ENCODE measurements at regions of chr4 and their contacts with region 1.

Region 1: DNA sequence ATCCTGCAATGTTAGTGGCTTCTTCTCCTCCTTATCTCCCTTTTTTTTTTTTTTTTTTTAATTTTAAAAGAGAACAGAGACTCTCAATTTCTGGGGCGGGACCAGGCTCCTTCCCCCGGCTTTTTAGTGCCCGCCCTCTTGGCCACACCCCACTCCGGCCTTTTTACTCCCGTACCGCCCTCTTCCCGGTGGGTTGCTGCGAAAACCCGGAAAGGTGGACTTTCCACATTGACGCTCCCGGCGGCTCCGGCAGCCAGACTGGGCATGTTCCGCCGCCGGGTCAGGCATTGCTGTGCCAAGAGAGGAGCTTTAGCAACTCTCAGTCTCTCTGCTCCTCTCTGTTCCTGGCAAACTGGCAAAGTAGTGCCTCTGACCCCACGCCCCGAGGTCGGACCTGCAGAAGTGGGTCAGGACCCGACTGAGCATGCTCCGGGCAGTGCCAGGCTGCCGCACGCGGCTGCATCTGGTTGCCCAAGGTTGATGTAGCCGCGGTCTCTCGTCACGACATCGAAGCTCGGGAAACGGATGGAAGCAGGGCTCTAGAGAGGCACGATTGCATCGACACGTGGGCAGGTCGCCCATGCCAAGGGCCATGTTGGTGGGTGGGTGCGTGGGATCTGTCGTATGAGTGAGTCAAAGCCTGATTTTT is 1.1 kb upstream of the MFAP3L start:
- DNase-seq: peak; percentile 77 to 94 (median 87)
- ATAC-seq: peak; percentile 76
- H3K4me3 ChIP-seq: peak overlapping the region; percentile 84
- H3K4me3 Mint-ChIP-seq: peak overlapping the region; percentile 93
- H3K27ac ChIP-seq: peak overlapping the region; percentile 6 to 65
- H3K27ac Mint-ChIP-seq: peak overlapping the region; percentile 60
- H3K4me1 ChIP-seq: peaks cover 5% of the 10 kb centered on the region
- H3K4me1 Mint-ChIP-seq: peaks cover 17% of the 10 kb centered on the region
- H3K27me3 ChIP-seq: peaks cover 0 to 5% of the 10 kb centered on the region in 2 experiments
- H3K27me3 Mint-ChIP-seq: peaks cover 7% of the 10 kb centered on the region
- CTCF ChIP-seq: no peak

Region 2: DNA sequence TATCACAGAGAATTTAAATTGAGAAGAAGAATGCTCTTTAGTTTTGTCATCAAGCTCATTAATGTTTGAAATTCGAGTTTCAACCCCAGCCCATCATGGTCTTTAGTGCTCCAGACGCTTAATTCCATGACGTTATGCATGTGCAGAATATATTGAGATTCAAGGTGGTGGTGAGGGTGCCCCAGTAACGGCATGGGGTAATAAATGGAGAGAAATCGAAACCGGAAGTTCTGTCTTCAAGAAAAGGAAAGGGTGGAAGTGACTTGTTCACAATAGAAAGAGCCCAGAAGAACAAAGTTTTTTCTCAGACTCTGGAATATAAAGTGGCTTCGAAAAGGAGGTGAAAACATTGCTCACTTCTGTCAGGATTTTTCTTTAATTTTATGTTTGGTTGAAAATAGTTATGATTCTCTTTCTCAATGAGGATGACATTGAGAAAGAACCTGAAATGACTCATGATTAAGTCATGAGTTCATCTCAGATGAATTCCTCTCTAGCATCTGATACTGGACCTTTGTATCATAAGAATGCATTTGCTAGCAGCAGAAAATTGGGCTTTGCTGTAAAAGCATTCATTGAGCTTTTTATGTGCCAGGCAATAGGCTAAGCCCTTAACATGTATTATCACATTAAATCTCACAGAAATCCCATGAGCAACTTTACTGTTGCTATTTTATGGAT is 1546.2 kb before region 1 on chr4:
- CTCF ChIA-PET with region 1: no interaction called
- POLR2A ChIA-PET with region 1: interaction called, 3 read pairs
- intact Hi-C with region 1: loop called (anchors 5 kb)
- DNase-seq: peak in 8 of 9 experiments; percentile 16 to 89 (median 56)
- ATAC-seq: peak; percentile 67
- H3K4me3 ChIP-seq: peak overlapping the region; percentile 56 to 93
- H3K4me3 Mint-ChIP-seq: peak overlapping the region; percentile 99
- H3K27ac ChIP-seq: peak overlapping the region; percentile 82 to 96
- H3K27ac Mint-ChIP-seq: peak overlapping the region; percentile 97
- H3K4me1 ChIP-seq: peaks cover 42% of the 10 kb centered on the region
- H3K4me1 Mint-ChIP-seq: peaks cover 66% of the 10 kb centered on the region
- H3K27me3 ChIP-seq: no peaks in the 10 kb centered on the region
- H3K27me3 Mint-ChIP-seq: no peaks in the 10 kb centered on the region
- CTCF ChIP-seq: no peak

Region 3: DNA sequence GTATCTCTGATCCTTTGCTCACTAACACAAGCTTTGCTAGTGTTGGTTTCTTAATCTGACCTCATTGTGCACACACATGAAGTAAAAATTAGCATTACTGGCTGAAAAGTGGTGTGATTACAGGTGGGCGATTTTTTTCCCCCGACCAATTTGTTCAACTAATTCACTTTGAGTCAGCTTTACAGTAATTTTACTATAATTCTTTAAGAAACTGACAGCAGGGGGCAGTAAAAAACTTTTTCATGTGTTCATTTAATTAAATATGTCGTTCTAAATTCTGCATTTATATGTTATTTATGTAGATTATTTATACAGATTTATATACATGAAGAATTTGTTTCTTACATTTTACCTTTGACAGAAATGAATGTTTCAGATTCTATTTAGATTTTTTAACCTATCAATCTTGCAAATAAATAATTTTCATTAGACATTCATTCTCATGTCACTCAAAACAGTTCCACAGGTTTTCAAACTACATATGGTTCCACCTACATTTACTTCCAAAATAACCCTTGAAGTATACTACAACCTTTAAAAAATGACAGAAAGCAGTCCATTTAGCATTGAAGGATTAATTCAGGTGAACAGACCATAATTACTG is 1513.0 kb before region 1 on chr4:
- CTCF ChIA-PET with region 1: no interaction called
- POLR2A ChIA-PET with region 1: no interaction called
- intact Hi-C with region 1: loop called in 1 of 2 experiments (anchors 5 kb)
- DNase-seq: peak in 2 of 9 experiments; percentile 40 to 58
- ATAC-seq: no peak
- H3K4me3 ChIP-seq: no peak overlapping the region
- H3K4me3 Mint-ChIP-seq: no peak overlapping the region
- H3K27ac ChIP-seq: no peak overlapping the region
- H3K27ac Mint-ChIP-seq: no peak overlapping the region
- H3K4me1 ChIP-seq: peaks cover 27% of the 10 kb centered on the region
- H3K4me1 Mint-ChIP-seq: peaks cover 37% of the 10 kb centered on the region
- H3K27me3 ChIP-seq: no peaks in the 10 kb centered on the region
- H3K27me3 Mint-ChIP-seq: no peaks in the 10 kb centered on the region
- CTCF ChIP-seq: peak; percentile 61

Region 4: GRCh38 chr4:169619959-169620879 is 407.1 kb before region 1 on chr4 and contains the start of gene CLCN3:
- CTCF ChIA-PET with region 1: no interaction called
- POLR2A ChIA-PET with region 1: no interaction called
- intact Hi-C with region 1: loop called in 1 of 2 experiments (anchors 1 kb)
- DNase-seq: peak; percentile 81 to 96 (median 93)
- ATAC-seq: peak; percentile 70
- H3K4me3 ChIP-seq: peak within 1 kb of the TSS; percentile 77 to 98
- H3K4me3 Mint-ChIP-seq: peak within 1 kb of the TSS; percentile 91
- H3K27ac ChIP-seq: peak within 1 kb of the TSS; percentile 92 to 99
- H3K27ac Mint-ChIP-seq: peak within 1 kb of the TSS; percentile 99
- H3K4me1 ChIP-seq: peaks cover 44% of the 10 kb centered on the region
- H3K4me1 Mint-ChIP-seq: peaks cover 62% of the 10 kb centered on the region
- H3K27me3 ChIP-seq: no peaks in the 10 kb centered on the region
- H3K27me3 Mint-ChIP-seq: no peaks in the 10 kb centered on the region
- CTCF ChIP-seq: no peak
- total RNA-seq, gene CLCN3: 10.2 to 10.9 TPM

Region 5: GRCh38 chr4:169757575-169758184 is 269.6 kb before region 1 on chr4 and contains the start of gene HPF1:
- CTCF ChIA-PET with region 1: no interaction called
- POLR2A ChIA-PET with region 1: no interaction called
- intact Hi-C with region 1: loop called (anchors 1 to 5 kb)
- DNase-seq: peak; percentile 82 to 97 (median 95)
- ATAC-seq: peak; percentile 98
- H3K4me3 ChIP-seq: peak within 1 kb of the TSS; percentile 62 to 97
- H3K4me3 Mint-ChIP-seq: peak within 1 kb of the TSS; percentile 82
- H3K27ac ChIP-seq: peak within 1 kb of the TSS; percentile 31 to 63
- H3K27ac Mint-ChIP-seq: peak within 1 kb of the TSS; percentile 64
- H3K4me1 ChIP-seq: peaks cover 14% of the 10 kb centered on the region
- H3K4me1 Mint-ChIP-seq: peaks cover 34% of the 10 kb centered on the region
- H3K27me3 ChIP-seq: no peaks in the 10 kb centered on the region
- H3K27me3 Mint-ChIP-seq: no peaks in the 10 kb centered on the region
- CTCF ChIP-seq: no peak
- total RNA-seq, gene HPF1: 3.1 to 4.2 TPM

Region 6: GRCh38 chr4:169975838-169976796 is 51.2 kb before region 1 on chr4:
- CTCF ChIA-PET with region 1: no interaction called
- POLR2A ChIA-PET with region 1: no interaction called
- intact Hi-C with region 1: no loop called
- DNase-seq: no peak
- ATAC-seq: no peak
- H3K4me3 ChIP-seq: no peak overlapping the region
- H3K4me3 Mint-ChIP-seq: no peak overlapping the region
- H3K27ac ChIP-seq: no peak overlapping the region
- H3K27ac Mint-ChIP-seq: no peak overlapping the region
- H3K4me1 ChIP-seq: no peaks in the 10 kb centered on the region
- H3K4me1 Mint-ChIP-seq: no peaks in the 10 kb centered on the region
- H3K27me3 ChIP-seq: no peaks in the 10 kb centered on the region
- H3K27me3 Mint-ChIP-seq: peaks cover 29% of the 10 kb centered on the region
- CTCF ChIP-seq: no peak

Measured in CD8-positive, alpha-beta T cell (primary cell).